H1 (cell line): ENCODE measurements at regions of chr19 and their contacts with region 1.

Region 1: GRCh38 chr19:13959962-13960862 is 7.9 kb downstream of the DCAF15 start:
- DNase-seq: peak in 1 of 2 experiments; percentile 73
- H3K4me3 ChIP-seq: no peak overlapping the region
- H3K27ac ChIP-seq: no peak overlapping the region; the same call in 1 of the 2 replicates
- H3K4me1 ChIP-seq: peaks cover 0 to 9% (median 4%) of the 10 kb centered on the region in 4 experiments; a peak in 4 of 7 replicates
- H3K27me3 ChIP-seq: peaks cover 0 to 4% (median 0%) of the 10 kb centered on the region in 4 experiments; a peak in 2 of 7 replicates
- CTCF ChIP-seq: peak; percentile 44 to 68 (median 60)
- EP300 ChIP-seq: no peak
- POLR2A ChIP-seq: no peak
- RAD21 ChIP-seq: peak; percentile 16 to 51; a peak in 3 of 4 replicates

Region 2: GRCh38 chr19:13938301-13939064 is 21.7 kb before region 1 on chr19 and contains the start of gene PODNL1:
- CTCF ChIA-PET with region 1: interaction called, 26 read pairs
- POLR2A ChIA-PET with region 1: interaction called, 39 read pairs
- DNase-seq: no peak
- H3K4me3 ChIP-seq: peak within 1 kb of the TSS in 1 of 4 experiments; percentile 34; a peak in 1 of 8 replicates
- H3K27ac ChIP-seq: no peak within 1 kb of the TSS
- H3K4me1 ChIP-seq: peaks cover 3 to 34% (median 19%) of the 10 kb centered on the region in 4 experiments
- H3K27me3 ChIP-seq: peaks cover 0 to 2% (median 0%) of the 10 kb centered on the region in 4 experiments; a peak in 1 of 7 replicates
- CTCF ChIP-seq: no peak
- EP300 ChIP-seq: no peak
- POLR2A ChIP-seq: no peak
- RAD21 ChIP-seq: no peak
- total RNA-seq, gene PODNL1: 0.75 and 1.5 TPM in 2 replicates

Region 3: DNA sequence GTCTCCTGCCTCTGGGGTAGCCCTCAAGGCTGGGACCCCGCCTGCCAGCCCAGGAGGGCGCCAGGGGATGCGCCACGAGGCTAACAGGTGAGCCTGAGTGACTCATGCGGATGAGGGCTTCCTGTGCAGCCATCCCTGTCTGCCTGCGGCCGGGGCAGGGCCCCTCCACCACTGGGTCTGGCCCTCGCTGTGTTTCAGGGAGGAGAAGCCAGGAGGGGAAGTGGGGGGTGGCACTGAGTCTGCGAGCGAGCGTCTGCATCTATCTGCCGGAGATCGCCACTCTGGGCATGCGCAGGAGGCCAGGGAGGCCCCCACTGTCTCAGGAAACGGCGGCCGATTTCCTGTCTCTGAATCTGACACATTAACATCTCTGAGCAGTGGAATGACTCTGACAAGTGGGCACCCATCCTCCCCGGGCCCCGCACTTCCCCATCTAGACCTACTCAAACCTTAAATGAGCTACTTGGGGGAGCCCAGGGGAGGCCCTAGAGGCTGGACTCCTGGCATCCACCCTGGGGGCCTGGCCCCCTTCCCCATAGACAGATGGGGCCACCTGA is 26.2 kb after region 1 on chr19:
- CTCF ChIA-PET with region 1: interaction called, 6 read pairs
- POLR2A ChIA-PET with region 1: interaction called, 15 read pairs
- DNase-seq: peak; percentile 68 to 85
- H3K4me3 ChIP-seq: peak overlapping the region in 3 of 4 experiments; percentile 7 to 46 (median 26); a peak in 4 of 8 replicates
- H3K27ac ChIP-seq: peak overlapping the region; percentile 83; the same call in 1 of the 2 replicates
- H3K4me1 ChIP-seq: peaks cover 0 to 42% (median 36%) of the 10 kb centered on the region in 4 experiments; a peak in 6 of 7 replicates
- H3K27me3 ChIP-seq: no peaks in the 10 kb centered on the region
- CTCF ChIP-seq: no peak
- EP300 ChIP-seq: no peak
- POLR2A ChIP-seq: peak in 1 of 2 experiments; percentile 51; a peak in 1 of 3 replicates
- RAD21 ChIP-seq: no peak

Region 4: GRCh38 chr19:14031719-14032480 is 71.7 kb after region 1 on chr19 and contains the start of gene IL27RA:
- CTCF ChIA-PET with region 1: interaction called, 11 read pairs
- POLR2A ChIA-PET with region 1: interaction called, 12 read pairs
- DNase-seq: peak; percentile 31 to 84
- H3K4me3 ChIP-seq: peak within 1 kb of the TSS; percentile 58 to 78 (median 68)
- H3K27ac ChIP-seq: no peak within 1 kb of the TSS
- H3K4me1 ChIP-seq: peaks cover 0 to 9% (median 3%) of the 10 kb centered on the region in 4 experiments; a peak in 6 of 7 replicates
- H3K27me3 ChIP-seq: peaks cover 0 to 12% (median 9%) of the 10 kb centered on the region in 4 experiments; a peak in 5 of 7 replicates
- CTCF ChIP-seq: peak; percentile 76 to 82 (median 78)
- EP300 ChIP-seq: no peak
- POLR2A ChIP-seq: no peak
- RAD21 ChIP-seq: peak; percentile 58 to 68
- total RNA-seq, gene IL27RA: 14.7 and 15.1 TPM in 2 replicates